Heart left ventricle (tissue), 16 donors: ENCODE measurements at regions of chr11 and their contacts with region 1.

Region 1: GRCh38 chr11:3723014-3723708 is 52.0 kb upstream of the CHRNA10 start:
- DNase-seq: no peak
- ATAC-seq: peak in 1 of 4 donors; percentile 34
- H3K4me3 ChIP-seq: no peak overlapping the region
- H3K27ac ChIP-seq: no peak overlapping the region
- H3K4me1 ChIP-seq: no peaks in the 10 kb centered on the region
- H3K27me3 ChIP-seq: no peaks in the 10 kb centered on the region
- CTCF ChIP-seq: no peak
- POLR2A ChIP-seq: no peak

Region 2: DNA sequence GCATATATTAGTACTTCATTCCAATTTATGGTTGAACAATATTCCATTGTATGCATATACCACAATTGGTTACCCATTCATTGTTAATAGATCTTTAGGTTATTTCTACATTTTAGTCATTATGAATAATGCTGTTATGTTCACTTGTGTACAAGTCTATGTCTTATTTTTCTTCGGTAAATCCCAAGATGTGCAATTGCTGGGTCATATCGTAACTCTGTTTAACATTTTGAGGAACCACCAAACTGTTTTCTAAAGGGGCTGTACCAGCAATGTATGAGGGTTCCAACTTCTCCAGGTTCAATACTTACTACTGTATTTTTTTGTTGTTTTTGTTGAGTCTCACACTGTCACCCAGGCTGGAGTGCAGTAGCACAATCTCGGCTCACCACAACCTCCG is 41.1 kb after region 1 on chr11:
- intact Hi-C with region 1: loop called in 1 of 10 experiments (anchors 5 kb)
- DNase-seq: no peak
- ATAC-seq: no peak
- H3K4me3 ChIP-seq: no peak overlapping the region
- H3K27ac ChIP-seq: no peak overlapping the region
- H3K4me1 ChIP-seq: no peaks in the 10 kb centered on the region
- H3K27me3 ChIP-seq: no peaks in the 10 kb centered on the region
- CTCF ChIP-seq: no peak
- POLR2A ChIP-seq: no peak